ENCODE measurements at regions of chr4 and their contacts with region 1.

Region 1: GRCh38 chr4:150583287-150584110 is 1.5 kb downstream of the MAB21L2 start:
- DNase-seq: peak; percentile 47
- ATAC-seq: peak; percentile 40
- H3K4me3 ChIP-seq: peak overlapping the region; percentile 78
- H3K27ac ChIP-seq: peak overlapping the region; percentile 94
- H3K4me1 ChIP-seq: 0 out of 2 replicates have a peak, but pooled peaks cover 2% of the 10 kb centered on the region
- H3K27me3 ChIP-seq: no peaks in the 10 kb centered on the region
- CTCF ChIP-seq: no peak
- POLR2A ChIP-seq: no peak
- RAD21 ChIP-seq: no peak

Region 2: DNA sequence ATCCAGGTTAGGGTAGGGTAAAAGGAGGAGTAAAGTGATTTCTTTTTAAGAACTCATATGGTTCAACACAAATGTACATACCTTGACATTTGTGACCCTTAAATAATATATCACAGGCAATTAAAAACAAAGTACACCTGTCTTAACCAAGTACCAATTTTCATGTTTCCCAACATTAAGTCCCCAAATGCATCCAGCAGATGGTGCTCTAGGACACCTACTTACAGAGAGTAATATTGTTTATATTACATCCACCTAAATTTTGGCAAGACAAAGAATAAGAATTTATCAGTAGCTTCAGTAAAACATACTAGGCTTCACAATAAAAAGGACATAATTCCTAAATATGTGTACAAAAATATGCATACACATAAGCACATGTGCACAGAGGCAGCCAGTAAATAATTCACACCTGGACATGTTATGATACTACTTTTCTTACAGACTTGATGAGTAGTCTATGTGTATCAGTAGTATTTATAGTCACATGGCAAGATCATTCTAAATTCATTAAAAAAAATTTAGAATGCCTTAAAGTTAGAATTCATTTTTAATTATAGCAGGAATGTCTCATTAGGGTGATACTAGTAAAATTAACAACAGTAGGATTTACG is 285.5 kb before region 1 on chr4:
- CTCF ChIA-PET with region 1: interaction called, 3 read pairs
- POLR2A ChIA-PET with region 1: no interaction called
- dilution Hi-C with region 1: no loop called
- in situ Hi-C with region 1: loop called (anchors 5 kb)
- intact Hi-C with region 1: loop called (anchors 2 kb)
- DNase-seq: peak; percentile 78
- ATAC-seq: peak; percentile 66
- H3K4me3 ChIP-seq: no peak overlapping the region
- H3K27ac ChIP-seq: no peak overlapping the region
- H3K4me1 ChIP-seq: no peaks in the 10 kb centered on the region
- H3K27me3 ChIP-seq: no peaks in the 10 kb centered on the region
- CTCF ChIP-seq: peak; percentile 81
- POLR2A ChIP-seq: no peak
- RAD21 ChIP-seq: peak; percentile 88

Region 3: GRCh38 chr4:150385606-150386005 is 197.9 kb before region 1 on chr4:
- CTCF ChIA-PET with region 1: no interaction called
- POLR2A ChIA-PET with region 1: no interaction called
- dilution Hi-C with region 1: no loop called
- in situ Hi-C with region 1: no loop called
- intact Hi-C with region 1: loop called (anchors 5 kb)
- DNase-seq: peak; percentile 92
- ATAC-seq: peak; percentile 92
- H3K4me3 ChIP-seq: no peak overlapping the region
- H3K27ac ChIP-seq: no peak overlapping the region
- H3K4me1 ChIP-seq: peaks cover 4% of the 10 kb centered on the region; the same call in 1 of the 2 replicates
- H3K27me3 ChIP-seq: no peaks in the 10 kb centered on the region
- CTCF ChIP-seq: no peak
- POLR2A ChIP-seq: no peak
- RAD21 ChIP-seq: no peak

Region 4: DNA sequence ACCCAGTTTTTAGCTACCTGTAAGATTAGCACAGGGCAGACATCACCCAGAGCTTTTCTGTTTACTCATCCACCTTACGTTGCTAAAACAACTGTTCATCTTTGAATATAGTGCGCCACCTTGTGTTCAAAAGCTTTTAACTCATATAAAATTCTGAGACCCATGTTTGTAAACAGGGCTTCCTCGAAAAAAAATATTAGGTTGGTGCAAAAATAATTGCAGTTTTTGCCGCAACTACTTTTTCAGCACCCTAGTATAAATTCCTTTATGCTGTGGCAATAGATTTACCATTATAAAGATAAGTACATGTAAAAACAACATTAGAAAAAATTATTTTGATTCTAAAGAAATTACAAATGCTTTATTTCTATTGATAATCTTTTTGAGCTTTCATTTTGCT is 283.6 kb after region 1 on chr4:
- CTCF ChIA-PET with region 1: no interaction called
- POLR2A ChIA-PET with region 1: no interaction called
- dilution Hi-C with region 1: no loop called
- in situ Hi-C with region 1: no loop called
- intact Hi-C with region 1: loop called (anchors 5 kb)
- DNase-seq: peak; percentile 81
- ATAC-seq: peak; percentile 72
- H3K4me3 ChIP-seq: no peak overlapping the region
- H3K27ac ChIP-seq: no peak overlapping the region
- H3K4me1 ChIP-seq: no peaks in the 10 kb centered on the region
- H3K27me3 ChIP-seq: no peaks in the 10 kb centered on the region
- CTCF ChIP-seq: peak; percentile 76
- POLR2A ChIP-seq: no peak
- RAD21 ChIP-seq: peak; percentile 77